A673 (cell line): ENCODE measurements at regions of chr5 and their contacts with region 1.

Region 1: DNA sequence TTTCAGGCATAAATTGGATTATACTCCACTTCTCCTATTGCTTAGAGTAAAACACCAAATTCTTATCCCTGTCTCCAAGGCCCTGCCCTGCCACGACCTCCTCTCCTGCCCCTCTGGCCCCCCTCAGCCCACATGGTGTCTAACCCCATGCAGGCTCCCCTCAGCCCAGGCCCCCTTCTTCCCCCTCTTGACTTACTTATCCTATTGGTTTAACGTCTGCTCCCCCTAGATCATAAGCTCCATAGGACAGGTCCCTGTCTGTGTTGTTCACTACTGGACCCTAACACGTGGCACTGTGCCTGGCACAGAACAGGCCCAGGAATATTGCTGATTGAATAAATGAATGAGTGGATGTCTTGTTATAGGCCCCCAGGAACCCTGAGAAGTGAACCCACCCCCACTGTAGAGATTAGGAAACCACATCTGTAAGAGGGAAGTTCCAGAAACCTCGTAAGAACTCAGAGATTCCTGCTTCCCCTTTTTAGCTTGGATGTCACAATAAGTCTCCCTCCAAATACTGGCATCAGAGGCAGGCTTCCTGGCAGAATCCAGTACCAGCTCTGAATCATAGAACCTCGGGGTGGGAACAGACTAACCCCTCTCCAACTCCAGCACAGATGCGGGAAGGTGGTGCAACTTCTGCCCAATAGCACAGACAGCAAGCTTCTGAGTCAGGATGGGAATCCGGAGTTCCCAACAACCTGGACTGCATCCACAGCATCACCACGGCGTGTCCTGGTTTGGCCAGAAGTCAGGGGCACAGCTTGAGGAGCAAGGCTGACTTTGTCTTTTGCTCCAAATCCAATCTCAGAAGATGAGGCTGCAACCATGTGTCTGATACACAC is 31.5 kb downstream of the HRH2 start:
- DNase-seq: no peak
- H3K4me3 ChIP-seq: no peak overlapping the region
- H3K27ac ChIP-seq: no peak overlapping the region
- H3K4me1 ChIP-seq: no peaks in the 10 kb centered on the region
- H3K27me3 ChIP-seq: peaks cover 17% of the 10 kb centered on the region
- CTCF ChIP-seq: no peak

Region 2: GRCh38 chr5:175572886-175573285 is 116.5 kb before region 1 on chr5:
- CTCF ChIA-PET with region 1: no interaction called
- POLR2A ChIA-PET with region 1: no interaction called
- intact Hi-C with region 1: no loop called
- DNase-seq: no peak
- H3K4me3 ChIP-seq: no peak overlapping the region
- H3K27ac ChIP-seq: no peak overlapping the region
- H3K4me1 ChIP-seq: no peaks in the 10 kb centered on the region
- H3K27me3 ChIP-seq: peaks cover 65% of the 10 kb centered on the region
- CTCF ChIP-seq: no peak

Region 3: GRCh38 chr5:175677571-175677970 is 11.8 kb before region 1 on chr5:
- CTCF ChIA-PET with region 1: interaction called, 12 read pairs
- POLR2A ChIA-PET with region 1: no interaction called
- intact Hi-C with region 1: no loop called
- DNase-seq: no peak
- H3K4me3 ChIP-seq: no peak overlapping the region
- H3K27ac ChIP-seq: no peak overlapping the region
- H3K4me1 ChIP-seq: no peaks in the 10 kb centered on the region
- H3K27me3 ChIP-seq: peaks cover 62% of the 10 kb centered on the region
- CTCF ChIP-seq: no peak

Region 4: DNA sequence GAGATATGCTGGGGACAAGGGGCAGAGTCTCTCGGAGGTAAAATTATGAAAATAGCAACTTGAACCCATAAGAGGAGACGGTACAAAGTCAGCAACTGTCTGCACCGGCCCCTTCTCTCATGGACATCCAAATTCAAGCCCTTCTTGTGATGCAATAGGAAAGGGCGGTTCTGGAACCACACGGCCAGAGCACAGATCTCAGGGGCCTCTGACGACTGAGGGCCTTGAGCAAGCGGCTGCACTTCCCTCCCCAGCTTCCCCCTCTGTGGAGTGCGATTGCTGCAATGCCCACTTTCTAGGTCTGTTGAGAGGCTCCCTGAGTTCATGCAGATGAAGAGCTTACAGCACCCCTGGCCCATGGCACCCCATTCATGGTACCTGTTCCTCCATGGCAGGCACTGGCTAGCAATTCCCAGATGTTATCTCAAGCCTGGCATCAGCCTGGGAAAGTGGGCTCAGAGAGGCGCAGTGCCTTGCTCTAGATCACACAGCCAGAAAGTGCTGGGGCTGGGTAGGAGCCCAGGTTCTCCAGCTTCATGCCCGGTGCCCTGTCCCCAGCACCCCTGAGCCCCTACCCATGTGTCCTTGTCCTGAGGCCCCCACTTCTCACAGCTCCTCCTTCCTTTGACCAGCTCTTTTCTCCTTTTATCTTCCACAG is 164.3 kb after region 1 on chr5:
- CTCF ChIA-PET with region 1: no interaction called
- POLR2A ChIA-PET with region 1: no interaction called
- intact Hi-C with region 1: no loop called
- DNase-seq: no peak
- H3K4me3 ChIP-seq: no peak overlapping the region
- H3K27ac ChIP-seq: no peak overlapping the region
- H3K4me1 ChIP-seq: no peaks in the 10 kb centered on the region
- H3K27me3 ChIP-seq: no peaks in the 10 kb centered on the region
- CTCF ChIP-seq: no peak

Region 5: GRCh38 chr5:176133289-176133870 is 444.0 kb after region 1 on chr5:
- CTCF ChIA-PET with region 1: no interaction called
- POLR2A ChIA-PET with region 1: no interaction called
- intact Hi-C with region 1: no loop called
- DNase-seq: no peak
- H3K4me3 ChIP-seq: no peak overlapping the region
- H3K27ac ChIP-seq: no peak overlapping the region
- H3K4me1 ChIP-seq: no peaks in the 10 kb centered on the region
- H3K27me3 ChIP-seq: peaks cover 53% of the 10 kb centered on the region
- CTCF ChIP-seq: no peak

Region 6: DNA sequence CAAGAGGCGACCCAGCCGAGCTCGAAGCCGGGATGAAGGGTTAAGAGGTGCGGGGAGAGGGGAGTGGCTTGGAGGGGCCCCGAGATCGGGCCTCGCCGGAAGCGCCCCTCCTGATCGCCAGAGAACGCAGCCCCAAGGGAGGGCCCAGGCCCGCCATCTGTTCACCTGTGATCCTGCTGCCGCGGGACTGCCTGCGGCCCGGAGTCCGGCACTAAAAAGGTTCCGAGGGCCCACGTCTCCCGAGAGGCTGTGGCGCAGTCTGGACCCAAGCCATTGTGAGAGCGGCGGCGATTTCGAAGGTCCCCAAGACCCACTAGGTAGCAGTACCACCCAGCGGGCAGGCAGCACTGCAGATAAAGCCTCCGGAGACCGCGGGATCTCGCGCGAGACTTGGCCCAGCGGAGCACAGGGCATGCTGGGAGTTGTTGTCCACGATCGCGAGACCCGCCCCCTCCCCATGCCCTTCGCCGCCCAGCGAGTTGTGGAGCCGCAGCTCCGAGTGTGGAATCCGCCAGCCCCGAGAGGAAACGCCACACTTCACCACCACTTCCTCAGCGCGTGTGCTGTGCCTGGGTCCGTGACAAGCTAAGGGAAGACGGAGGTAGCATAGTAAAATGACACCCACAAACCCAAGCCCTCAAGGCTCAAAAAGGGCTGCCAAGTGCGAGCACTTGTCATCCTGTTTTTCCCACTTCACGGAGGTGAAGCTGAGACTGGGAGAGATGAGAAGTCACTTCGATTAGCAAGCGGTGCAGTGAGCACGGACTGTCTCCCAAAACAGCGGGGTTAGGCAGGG is 672.3 kb after region 1 on chr5 and contains the start of gene KIAA1191:
- CTCF ChIA-PET with region 1: no interaction called
- POLR2A ChIA-PET with region 1: no interaction called
- intact Hi-C with region 1: no loop called
- DNase-seq: peak; percentile 91
- H3K4me3 ChIP-seq: peak within 1 kb of the TSS; percentile 95
- H3K27ac ChIP-seq: peak within 1 kb of the TSS; percentile 88
- H3K4me1 ChIP-seq: peaks cover 4% of the 10 kb centered on the region
- H3K27me3 ChIP-seq: no peaks in the 10 kb centered on the region
- CTCF ChIP-seq: no peak; the same call in 1 of the 2 replicates
- total RNA-seq, gene KIAA1191: 99.3 and 102 TPM in 2 replicates